Activated CD4-positive, alpha-beta T cell treated with anti-CD3 and anti-CD28 coated beads, Interleukin-2, amount 10 ng/mL, durations not matched to agents 7 days and 5 days (primary cell): ENCODE measurements at regions of chr1 and their contacts with region 1.

Region 1: DNA sequence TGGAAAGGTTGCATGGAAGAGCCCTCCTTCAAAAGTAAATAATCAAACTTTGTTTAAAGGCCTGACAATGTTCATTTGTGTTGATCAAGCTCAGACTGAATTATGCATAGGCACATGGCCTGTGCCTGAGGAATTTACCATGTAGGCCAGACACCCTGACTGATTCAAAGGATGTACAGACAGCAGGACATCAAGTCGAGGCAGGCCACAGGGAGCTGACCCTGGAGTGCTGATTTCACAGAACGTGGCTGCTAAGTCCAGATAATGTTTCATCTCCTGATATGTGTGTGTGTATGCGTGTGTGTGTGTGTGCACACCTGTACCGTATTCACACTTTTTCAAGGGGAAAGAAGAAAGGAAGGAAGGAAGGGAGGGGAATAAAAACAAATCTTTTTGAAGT is 34.1 kb downstream of the NAV1 start:
- DNase-seq: no peak
- H3K4me3 Mint-ChIP-seq: no peak overlapping the region
- H3K27ac Mint-ChIP-seq: peak overlapping the region; percentile 54
- H3K4me1 Mint-ChIP-seq: peaks cover 5% of the 10 kb centered on the region
- H3K27me3 Mint-ChIP-seq: peaks cover 9% of the 10 kb centered on the region

Region 2: GRCh38 chr1:201559679-201560162 is 13.3 kb before region 1 on chr1:
- CTCF ChIA-PET with region 1: interaction called, 12 read pairs
- POLR2A ChIA-PET with region 1: no interaction called
- DNase-seq: peak; percentile 74
- H3K4me3 Mint-ChIP-seq: no peak overlapping the region
- H3K27ac Mint-ChIP-seq: no peak overlapping the region
- H3K4me1 Mint-ChIP-seq: peaks cover 12% of the 10 kb centered on the region
- H3K27me3 Mint-ChIP-seq: peaks cover 3% of the 10 kb centered on the region